Activated CD4-positive, alpha-beta T cell treated with anti-CD3 and anti-CD28 coated beads, Interleukin-2, amount 10 ng/mL, durations not matched to agents 24 days and 14 days (primary cell): ENCODE measurements at regions of chr14 and their contacts with region 1.

Region 1: DNA sequence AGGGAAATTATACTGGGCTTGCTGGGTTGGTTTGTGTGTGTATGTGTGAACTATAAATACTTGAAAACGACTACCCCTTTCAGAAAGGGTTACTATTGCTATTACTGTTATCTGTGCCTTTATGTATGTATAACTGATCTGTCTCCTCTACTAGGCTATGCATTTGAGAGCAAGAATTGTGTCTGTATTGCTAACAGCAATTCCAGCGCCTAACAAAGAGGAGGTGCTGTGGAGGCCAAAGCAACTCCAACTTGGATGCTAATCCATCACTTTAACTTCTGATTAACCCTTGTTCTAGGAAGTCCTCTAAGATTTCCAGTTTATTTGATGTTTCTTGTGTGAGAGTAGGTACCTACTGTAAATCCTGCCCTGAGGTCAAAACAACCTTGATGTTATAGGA is 313.9 kb downstream of the PCNX1 start:
- DNase-seq: no peak
- H3K4me3 Mint-ChIP-seq: no peak overlapping the region
- H3K27ac Mint-ChIP-seq: no peak overlapping the region
- H3K4me1 Mint-ChIP-seq: peaks cover 15% of the 10 kb centered on the region
- H3K27me3 Mint-ChIP-seq: no peaks in the 10 kb centered on the region

Region 2: GRCh38 chr14:71331403-71331802 is 110.3 kb after region 1 on chr14:
- intact Hi-C with region 1: loop called (anchors 1 kb)
- DNase-seq: no peak
- H3K4me3 Mint-ChIP-seq: peak overlapping the region; percentile 23
- H3K27ac Mint-ChIP-seq: peak overlapping the region; percentile 92
- H3K4me1 Mint-ChIP-seq: peaks cover 55% of the 10 kb centered on the region
- H3K27me3 Mint-ChIP-seq: no peaks in the 10 kb centered on the region

Region 3: GRCh38 chr14:71478542-71478941 is 257.4 kb after region 1 on chr14:
- intact Hi-C with region 1: loop called (anchors 1 kb)
- DNase-seq: peak; percentile 77
- H3K4me3 Mint-ChIP-seq: peak overlapping the region; percentile 15
- H3K27ac Mint-ChIP-seq: peak overlapping the region; percentile 68
- H3K4me1 Mint-ChIP-seq: peaks cover 45% of the 10 kb centered on the region
- H3K27me3 Mint-ChIP-seq: no peaks in the 10 kb centered on the region